ENCODE measurements at regions of chr2 and their contacts with region 1.

Region 1: GRCh38 chr2:76599732-76600368 is 889.1 kb upstream of the GCFC2 start:
- DNase-seq: peak; percentile 46
- ATAC-seq: peak; percentile 78

Region 2: DNA sequence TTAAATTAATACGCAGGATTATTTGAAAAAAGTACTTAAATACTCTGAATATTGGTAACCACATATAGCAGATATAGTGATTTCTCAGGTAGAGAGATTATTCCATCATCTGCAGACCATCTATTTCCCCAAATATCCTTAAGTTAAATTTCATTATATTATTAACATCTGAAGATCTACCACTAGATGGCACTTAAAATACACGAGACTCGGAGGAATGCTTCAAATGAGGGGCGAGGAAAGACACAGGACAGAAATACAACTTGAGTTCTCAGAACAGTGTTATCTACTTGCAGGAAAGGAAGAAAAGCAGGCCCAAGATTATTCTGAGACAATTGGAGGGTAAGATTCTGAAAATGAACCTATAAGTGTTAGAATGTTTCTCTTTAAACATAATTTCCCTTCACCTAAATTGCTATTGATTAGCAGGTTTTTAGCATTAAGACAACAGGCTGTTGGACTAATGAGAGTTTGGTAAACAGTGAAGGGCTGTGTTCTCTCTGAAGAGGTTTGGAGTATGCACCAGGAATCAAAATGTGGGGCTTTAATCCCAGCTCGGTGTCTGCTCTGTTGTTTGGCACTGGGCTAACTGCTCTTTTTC is 812.2 kb before region 1 on chr2:
- intact Hi-C with region 1: loop called (anchors 5 kb)
- DNase-seq: no peak
- ATAC-seq: no peak

Region 3: DNA sequence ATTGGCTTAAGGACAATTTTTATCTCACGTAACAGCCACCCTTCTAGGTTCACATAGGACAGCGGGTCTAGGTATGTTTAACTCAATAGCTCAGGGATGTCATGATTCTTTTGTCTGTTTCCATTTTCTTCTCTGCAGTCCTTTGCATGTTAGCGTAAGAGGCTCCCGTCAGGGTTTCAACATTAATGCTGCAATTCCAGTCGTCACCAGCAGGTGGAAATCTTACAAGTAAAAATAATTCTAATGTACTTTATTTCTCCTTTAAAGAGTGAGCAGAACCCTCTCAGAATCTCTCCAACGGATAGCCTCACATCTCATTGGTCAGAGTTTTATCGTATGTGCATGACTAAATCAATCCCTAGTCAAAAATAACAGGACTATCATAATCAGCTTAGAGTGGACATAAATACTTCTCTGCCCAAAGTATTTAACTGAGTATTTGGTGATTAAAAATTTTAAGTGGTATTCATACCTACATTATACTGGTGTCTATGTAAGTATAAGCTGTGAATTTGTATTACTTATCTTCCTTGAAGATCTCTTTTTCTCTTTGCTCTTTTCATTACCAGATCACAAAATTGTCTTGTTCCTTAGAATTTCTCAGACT is 401.9 kb before region 1 on chr2:
- intact Hi-C with region 1: loop called (anchors 5 kb)
- DNase-seq: no peak
- ATAC-seq: no peak

Region 4: DNA sequence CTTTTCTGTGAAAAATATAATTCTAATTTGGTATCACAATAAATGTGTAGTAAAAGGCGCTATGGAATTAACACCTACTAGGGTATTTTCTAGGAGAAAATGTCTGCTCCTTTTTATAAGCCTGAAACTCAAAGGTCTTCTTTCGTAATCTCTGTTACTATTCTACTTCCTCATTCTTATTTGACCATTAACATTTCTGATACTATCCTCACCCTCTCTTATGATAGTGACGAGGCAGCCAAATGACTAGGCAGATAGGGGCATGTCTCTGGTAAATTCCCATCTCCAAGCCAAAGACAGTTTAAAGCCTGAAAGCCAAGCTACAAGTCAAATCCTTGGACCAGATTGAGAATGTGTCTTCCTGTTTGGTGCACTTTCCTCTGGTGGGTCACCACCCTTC is 670.6 kb after region 1 on chr2:
- intact Hi-C with region 1: no loop called
- DNase-seq: no peak
- ATAC-seq: no peak

Measured in Right ventricle myocardium superior (tissue), 1 donor.